Gastrocnemius medialis (tissue), 4 donors: ENCODE measurements at regions of chr6 and their contacts with region 1.

Region 1: GRCh38 chr6:14986370-14986769 is 259.5 kb upstream of the JARID2 start:
- DNase-seq: no peak
- ATAC-seq: no peak
- H3K4me3 ChIP-seq: no peak overlapping the region
- H3K27ac ChIP-seq: no peak overlapping the region
- H3K4me1 ChIP-seq: peaks cover 7 to 16% of the 10 kb centered on the region in 2 donors
- H3K27me3 ChIP-seq: no peaks in the 10 kb centered on the region
- CTCF ChIP-seq: no peak
- POLR2A ChIP-seq: no peak

Region 2: DNA sequence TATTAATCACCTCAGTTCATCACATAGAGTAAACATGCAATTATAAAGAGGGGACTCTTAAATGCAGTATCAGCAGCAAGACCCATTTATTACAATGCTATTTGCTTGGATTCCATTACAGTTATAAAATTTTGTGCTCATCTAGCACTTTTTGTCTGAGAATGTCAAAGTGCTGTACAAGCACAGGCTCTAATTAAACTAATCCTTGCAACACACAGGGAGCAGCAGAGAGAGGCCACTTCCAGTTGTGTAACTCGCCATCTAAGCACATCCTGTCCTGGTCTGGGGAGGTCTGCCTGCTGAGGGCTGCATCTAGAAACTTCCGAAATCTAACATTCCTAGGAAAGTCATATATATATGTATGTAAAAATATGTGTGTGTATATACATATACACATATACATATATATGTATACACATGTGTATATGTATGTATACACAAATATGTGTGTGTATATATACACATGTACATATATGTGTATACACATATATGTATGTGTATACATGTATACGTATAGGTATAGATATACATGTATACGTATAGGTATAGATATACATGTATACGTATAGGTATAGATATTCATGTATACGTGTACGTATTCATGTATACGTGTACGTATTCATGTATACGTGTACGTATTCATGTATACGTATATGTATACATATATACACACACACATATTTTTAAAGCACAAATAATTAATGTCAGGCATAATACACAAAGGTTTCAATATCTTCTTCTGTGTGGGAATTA is 123.1 kb after region 1 on chr6:
- in situ Hi-C with region 1: no loop called
- intact Hi-C with region 1: loop called (anchors 2 kb)
- DNase-seq: peak in 1 of 2 donors; percentile 27
- ATAC-seq: peak in 1 of 2 donors; percentile 44
- H3K4me3 ChIP-seq: no peak overlapping the region
- H3K27ac ChIP-seq: no peak overlapping the region
- H3K4me1 ChIP-seq: no peaks in the 10 kb centered on the region
- H3K27me3 ChIP-seq: no peaks in the 10 kb centered on the region
- CTCF ChIP-seq: no peak
- POLR2A ChIP-seq: no peak